Activated CD4-positive, alpha-beta memory T cell treated with anti-CD3 and anti-CD28 coated beads for 36 hours (primary cell): ENCODE measurements at regions of chr4 and their contacts with region 1.

Region 1: DNA sequence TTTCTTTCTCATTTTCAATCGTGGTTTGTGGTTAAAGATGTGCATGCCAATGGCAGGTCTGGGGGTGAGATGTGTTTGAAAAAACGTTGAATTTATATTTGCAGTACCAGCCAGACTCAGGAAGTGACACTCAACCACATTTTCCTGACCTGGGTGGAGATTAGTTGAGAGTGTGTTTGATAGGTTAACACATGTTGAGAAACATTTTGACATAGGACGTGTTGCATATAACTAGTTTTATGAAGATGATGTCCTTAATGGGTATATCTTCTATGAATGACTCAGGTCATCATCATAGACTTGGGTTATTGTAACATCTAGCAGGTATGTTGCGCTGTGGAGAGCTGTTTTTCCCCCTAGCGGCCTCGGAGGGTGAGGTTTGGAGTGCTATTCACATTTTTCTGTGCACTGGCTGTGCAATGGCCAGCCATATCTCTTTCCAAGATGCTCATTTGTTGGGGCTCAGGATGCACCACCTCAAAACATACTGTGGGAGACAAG is 21.7 kb upstream of the CD38 start:
- DNase-seq: peak; percentile 88
- H3K4me3 Mint-ChIP-seq: peak overlapping the region; percentile 50
- H3K27ac Mint-ChIP-seq: peak overlapping the region; percentile 73
- H3K4me1 Mint-ChIP-seq: peaks cover 43% of the 10 kb centered on the region
- H3K27me3 Mint-ChIP-seq: no peaks in the 10 kb centered on the region

Region 2: GRCh38 chr4:14856076-14856933 is 900.1 kb before region 1 on chr4:
- CTCF ChIA-PET with region 1: no interaction called
- POLR2A ChIA-PET with region 1: no interaction called
- intact Hi-C with region 1: loop called (anchors 5 kb)
- DNase-seq: peak; percentile 89
- H3K4me3 Mint-ChIP-seq: no peak overlapping the region
- H3K27ac Mint-ChIP-seq: peak overlapping the region; percentile 79
- H3K4me1 Mint-ChIP-seq: peaks cover 27% of the 10 kb centered on the region
- H3K27me3 Mint-ChIP-seq: peaks cover 4% of the 10 kb centered on the region

Region 3: GRCh38 chr4:15681207-15682015 is 75.0 kb before region 1 on chr4 and contains the start of gene FAM200B:
- CTCF ChIA-PET with region 1: interaction called, 3 read pairs
- POLR2A ChIA-PET with region 1: no interaction called
- intact Hi-C with region 1: loop called (anchors 1 kb)
- DNase-seq: peak; percentile 99
- H3K4me3 Mint-ChIP-seq: peak within 1 kb of the TSS; percentile 99
- H3K27ac Mint-ChIP-seq: peak within 1 kb of the TSS; percentile 95
- H3K4me1 Mint-ChIP-seq: peaks cover 29% of the 10 kb centered on the region
- H3K27me3 Mint-ChIP-seq: no peaks in the 10 kb centered on the region
- total RNA-seq, gene FAM200B: 8.3 to 8.9 TPM

Region 4: DNA sequence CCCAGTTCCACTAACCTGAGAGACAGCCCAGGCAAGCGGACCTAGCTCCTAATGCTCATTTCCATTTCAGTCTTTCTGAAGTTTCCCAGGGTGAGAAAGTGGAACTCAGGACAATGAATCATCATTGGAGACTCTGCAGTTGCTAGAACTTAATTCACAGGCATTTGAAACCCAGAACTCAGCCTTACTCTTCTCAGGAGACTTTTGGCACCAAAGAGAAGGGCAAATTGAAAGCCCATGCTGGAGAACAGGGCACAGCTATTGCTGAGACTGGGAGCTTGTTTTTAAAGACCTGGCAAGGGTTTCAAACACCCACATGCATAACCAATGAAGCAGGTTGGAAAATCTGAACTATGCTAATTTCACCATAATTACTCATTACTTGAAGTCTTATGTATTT is 17.5 kb before region 1 on chr4:
- CTCF ChIA-PET with region 1: interaction called, 39 read pairs
- POLR2A ChIA-PET with region 1: interaction called, 17 read pairs
- intact Hi-C with region 1: loop called (anchors 1 kb)
- DNase-seq: peak; percentile 19
- H3K4me3 Mint-ChIP-seq: no peak overlapping the region
- H3K27ac Mint-ChIP-seq: peak overlapping the region; percentile 24
- H3K4me1 Mint-ChIP-seq: peaks cover 31% of the 10 kb centered on the region
- H3K27me3 Mint-ChIP-seq: no peaks in the 10 kb centered on the region

Region 5: GRCh38 chr4:15794905-15795304 is 38.5 kb after region 1 on chr4:
- CTCF ChIA-PET with region 1: interaction called, 4 read pairs
- POLR2A ChIA-PET with region 1: no interaction called
- intact Hi-C with region 1: loop called (anchors 1 kb)
- DNase-seq: no peak
- H3K4me3 Mint-ChIP-seq: no peak overlapping the region
- H3K27ac Mint-ChIP-seq: peak overlapping the region; percentile 10
- H3K4me1 Mint-ChIP-seq: peaks cover 29% of the 10 kb centered on the region
- H3K27me3 Mint-ChIP-seq: peaks cover 4% of the 10 kb centered on the region

Region 6: DNA sequence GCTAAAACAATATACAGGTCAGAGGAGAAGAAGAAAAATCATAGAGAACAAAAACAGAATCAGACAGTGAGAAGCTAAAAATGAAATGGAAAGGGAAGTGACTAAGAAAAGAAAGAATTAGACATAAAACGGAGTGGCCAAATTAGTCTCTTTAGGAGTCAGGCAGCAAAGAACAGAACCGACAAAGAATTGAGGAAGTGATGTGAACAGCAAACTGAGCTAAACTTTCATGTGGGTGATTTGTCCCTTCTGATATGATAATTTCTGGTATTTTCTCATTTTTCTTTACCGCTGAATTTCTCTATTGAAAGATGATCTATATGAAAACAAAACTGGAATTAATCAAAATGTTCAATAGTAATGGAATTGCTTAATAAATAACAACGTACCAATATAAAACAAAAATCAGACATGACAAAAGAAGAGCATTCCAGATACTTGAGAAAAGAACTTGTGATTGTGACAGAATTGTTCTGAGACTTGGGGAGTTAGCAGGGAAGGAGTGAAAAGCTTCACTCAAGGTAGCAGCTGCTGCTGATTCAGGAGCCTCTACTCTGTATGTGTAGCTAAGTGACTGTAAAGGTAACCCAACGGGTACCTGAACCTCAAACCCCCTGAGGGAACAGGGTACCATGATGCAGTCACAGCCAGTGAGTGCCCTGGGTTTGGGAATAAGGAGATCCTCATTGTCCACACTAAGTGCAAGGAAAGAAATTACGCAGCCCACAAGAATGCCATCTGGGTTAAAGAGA is 461.1 kb after region 1 on chr4:
- CTCF ChIA-PET with region 1: no interaction called
- POLR2A ChIA-PET with region 1: no interaction called
- intact Hi-C with region 1: loop called (anchors 5 kb)
- DNase-seq: no peak
- H3K4me3 Mint-ChIP-seq: peak overlapping the region; percentile 13
- H3K27ac Mint-ChIP-seq: peak overlapping the region; percentile 47
- H3K4me1 Mint-ChIP-seq: peaks cover 69% of the 10 kb centered on the region
- H3K27me3 Mint-ChIP-seq: no peaks in the 10 kb centered on the region